Activated CD4-positive, alpha-beta memory T cell treated with anti-CD3 and anti-CD28 coated beads, Interleukin-2, amount 10 ng/mL, durations not matched to agents 7 days and 5 days (primary cell): ENCODE measurements at regions of chr14 and their contacts with region 1.

Region 1: DNA sequence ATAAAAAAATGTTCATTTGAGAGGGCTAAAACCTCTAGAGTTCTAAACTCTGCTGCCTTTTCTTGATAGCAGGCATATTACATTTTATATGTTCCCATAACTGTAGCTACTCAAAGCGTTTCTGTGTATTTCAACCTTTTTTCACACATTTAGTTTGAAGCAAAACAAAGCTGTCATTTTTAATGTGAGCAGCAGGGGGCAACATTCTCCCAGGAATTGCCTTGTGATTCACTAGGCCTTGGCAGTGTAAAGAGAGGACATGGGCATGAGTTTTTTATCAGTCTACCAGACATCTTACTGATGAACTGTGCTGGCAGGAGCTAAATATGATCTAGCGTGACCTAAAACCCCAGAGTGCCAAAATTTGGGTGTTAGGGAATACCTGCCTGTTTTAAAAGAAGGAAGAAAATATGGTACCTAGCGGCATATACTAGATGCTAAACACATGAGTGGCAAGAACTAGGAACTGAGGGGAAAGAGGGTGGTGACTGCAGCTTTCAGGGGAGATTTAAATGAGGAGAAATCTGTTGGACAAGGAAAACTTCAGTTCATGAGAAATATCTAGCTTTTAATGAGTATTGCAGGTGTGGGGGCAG is 65.3 kb downstream of the IFT43 start:
- DNase-seq: peak; percentile 56
- H3K4me3 Mint-ChIP-seq: no peak overlapping the region
- H3K27ac Mint-ChIP-seq: no peak overlapping the region
- H3K4me1 Mint-ChIP-seq: peaks cover 1% of the 10 kb centered on the region
- H3K27me3 Mint-ChIP-seq: no peaks in the 10 kb centered on the region

Region 2: DNA sequence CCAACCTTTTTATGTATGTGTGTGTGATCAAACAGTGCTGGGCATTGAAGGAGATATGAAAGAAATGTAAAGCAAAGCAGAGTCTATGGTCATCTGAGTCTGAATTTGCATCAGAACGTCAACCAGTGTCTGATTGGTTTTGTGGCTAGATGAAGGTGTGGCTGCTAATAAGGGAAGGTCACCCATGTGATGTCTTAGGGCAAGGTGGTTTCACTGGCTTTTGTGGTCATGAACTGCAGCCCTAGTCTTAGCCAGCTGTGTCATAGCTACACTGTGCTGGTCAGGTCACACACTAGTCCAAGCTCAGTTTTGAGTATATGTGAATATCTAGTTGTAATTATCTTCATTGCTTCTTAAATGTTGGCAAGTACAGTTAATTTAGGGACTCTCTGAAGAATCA is 174.9 kb before region 1 on chr14:
- CTCF ChIA-PET with region 1: no interaction called
- POLR2A ChIA-PET with region 1: no interaction called
- DNase-seq: no peak
- H3K4me3 Mint-ChIP-seq: no peak overlapping the region
- H3K27ac Mint-ChIP-seq: no peak overlapping the region
- H3K4me1 Mint-ChIP-seq: peaks cover 34% of the 10 kb centered on the region
- H3K27me3 Mint-ChIP-seq: no peaks in the 10 kb centered on the region

Region 3: GRCh38 chr14:76080025-76080424 is 29.1 kb after region 1 on chr14:
- CTCF ChIA-PET with region 1: no interaction called
- POLR2A ChIA-PET with region 1: no interaction called
- DNase-seq: no peak
- H3K4me3 Mint-ChIP-seq: no peak overlapping the region
- H3K27ac Mint-ChIP-seq: no peak overlapping the region
- H3K4me1 Mint-ChIP-seq: no peaks in the 10 kb centered on the region
- H3K27me3 Mint-ChIP-seq: no peaks in the 10 kb centered on the region

Region 4: DNA sequence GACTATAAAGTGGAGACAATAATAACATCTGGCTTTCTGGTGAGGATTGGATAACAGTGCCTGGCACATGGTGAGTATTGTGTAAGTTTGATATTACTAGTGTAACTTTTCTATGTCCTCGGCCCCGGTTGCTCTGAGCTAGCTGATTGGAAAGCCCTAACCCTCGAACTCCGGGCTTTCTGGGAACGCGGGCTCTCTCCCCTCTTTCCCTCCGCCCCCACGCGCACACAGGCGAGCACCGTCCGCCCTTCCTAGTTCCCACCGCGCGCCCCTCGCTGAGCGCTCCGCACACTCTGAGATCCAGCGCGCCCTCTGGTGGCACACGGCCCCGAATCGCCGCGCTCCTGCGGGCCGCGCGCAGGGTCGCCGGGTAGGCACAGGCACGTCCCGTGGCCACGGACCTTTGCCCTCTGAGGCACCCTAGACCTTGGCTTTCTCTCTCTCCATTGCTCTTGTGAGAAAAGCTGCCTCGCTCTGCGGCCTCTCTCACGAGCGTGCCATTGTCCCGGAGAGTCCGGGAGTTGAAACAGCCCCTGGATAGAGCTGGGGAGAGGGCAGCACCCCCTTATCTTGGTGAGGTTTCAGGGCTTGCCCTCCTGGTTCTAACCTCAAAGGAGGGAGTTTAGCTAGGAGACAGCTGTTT is 301.9 kb after region 1 on chr14:
- CTCF ChIA-PET with region 1: interaction called, 95 read pairs
- POLR2A ChIA-PET with region 1: no interaction called
- DNase-seq: peak; percentile 46
- H3K4me3 Mint-ChIP-seq: no peak overlapping the region
- H3K27ac Mint-ChIP-seq: no peak overlapping the region
- H3K4me1 Mint-ChIP-seq: peaks cover 4% of the 10 kb centered on the region
- H3K27me3 Mint-ChIP-seq: peaks cover 16% of the 10 kb centered on the region

Region 5: GRCh38 chr14:76386915-76387782 is 336.3 kb after region 1 on chr14:
- CTCF ChIA-PET with region 1: interaction called, 19 read pairs
- POLR2A ChIA-PET with region 1: no interaction called
- DNase-seq: peak; percentile 73
- H3K4me3 Mint-ChIP-seq: no peak overlapping the region
- H3K27ac Mint-ChIP-seq: no peak overlapping the region
- H3K4me1 Mint-ChIP-seq: peaks cover 4% of the 10 kb centered on the region
- H3K27me3 Mint-ChIP-seq: peaks cover 42% of the 10 kb centered on the region